ENCODE measurements at regions of chr20 and their contacts with region 1.

Region 1: GRCh38 chr20:34312544-34313217 is 9.5 kb upstream of the AHCY start:
- DNase-seq: peak; percentile 77 to 98 (median 90)

Region 2: DNA sequence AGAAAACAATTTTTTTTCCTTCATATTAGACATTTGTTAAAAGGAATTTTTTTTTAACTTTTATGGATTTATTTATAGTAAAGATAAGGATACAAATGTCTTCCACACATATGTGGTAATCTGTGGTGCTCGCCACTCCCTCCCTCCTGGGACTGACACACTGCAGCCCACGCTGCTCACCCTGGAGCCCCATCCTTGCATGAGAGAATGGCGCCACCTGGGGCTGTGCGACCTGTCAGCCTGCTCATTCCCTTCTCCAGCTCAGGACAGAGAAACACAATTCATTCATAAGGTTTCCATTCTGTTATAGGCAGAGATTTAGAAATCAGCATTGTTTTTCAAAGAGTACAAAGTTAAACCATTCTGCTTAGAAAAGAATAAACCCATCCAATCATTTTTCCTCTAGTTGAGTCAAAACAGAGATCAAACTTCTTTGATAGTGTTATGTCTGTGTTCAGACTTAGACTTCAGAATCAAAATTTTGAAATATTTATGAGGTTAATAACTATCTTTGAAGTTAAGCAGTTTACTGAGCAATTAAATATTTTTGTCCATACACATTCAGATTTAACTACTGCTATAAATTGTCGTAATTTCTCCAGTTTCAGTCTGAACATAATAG is 160.7 kb after region 1 on chr20:
- intact Hi-C with region 1: loop called (anchors 2 kb)
- DNase-seq: peak in 7 of 10 donors; percentile 36 to 93 (median 59)

Region 3: DNA sequence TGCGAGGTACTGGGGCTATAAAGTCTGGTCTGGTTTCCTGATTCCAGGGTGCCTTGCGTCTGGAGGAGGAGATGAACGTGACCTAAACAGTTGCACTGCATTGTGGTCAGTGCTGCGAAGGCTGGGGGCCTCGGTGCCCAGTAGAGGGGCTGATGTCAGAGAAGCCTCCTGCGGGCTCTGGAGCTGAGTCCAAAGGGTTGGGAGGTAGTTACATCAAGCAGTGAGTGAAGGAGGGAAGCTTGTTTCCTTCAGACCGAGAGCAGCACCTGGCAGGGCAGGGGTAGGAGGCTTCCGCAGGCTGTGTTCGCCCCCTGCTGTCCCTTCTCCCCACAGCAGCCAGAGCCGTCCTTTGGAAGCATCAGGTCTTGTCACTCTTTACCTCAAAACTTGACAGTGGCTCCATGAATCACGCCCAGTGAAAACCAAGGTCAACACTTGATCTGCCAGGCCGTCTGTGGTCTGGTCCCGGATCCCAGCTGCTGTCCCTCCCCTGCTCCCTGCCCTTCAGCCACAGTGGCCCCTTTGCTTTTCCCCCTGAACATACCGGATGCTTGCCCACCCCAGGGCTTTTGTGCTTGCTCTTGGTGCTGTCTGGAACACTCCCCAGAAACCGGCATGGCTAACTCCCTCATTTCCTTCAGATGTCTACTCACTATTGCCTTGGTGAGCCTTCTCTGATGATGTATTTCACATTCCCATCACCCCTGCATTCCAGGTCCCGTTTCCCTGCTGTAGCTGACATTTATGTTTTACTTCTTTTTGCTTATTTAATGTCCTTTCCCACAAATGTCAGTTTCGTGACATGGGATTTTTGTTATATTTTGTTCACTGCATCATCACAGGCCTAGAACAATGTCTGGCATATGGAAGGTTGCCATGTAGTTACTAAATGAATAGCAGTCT is 210.5 kb after region 1 on chr20:
- intact Hi-C with region 1: loop called (anchors 5 kb)
- DNase-seq: peak in 7 of 10 donors; percentile 50 to 94 (median 57)

Measured in posterior cingulate gyrus (tissue), 11 donors.